SK-N-SH (cell line): ENCODE measurements at regions of chr2 and their contacts with region 1.

Region 1: DNA sequence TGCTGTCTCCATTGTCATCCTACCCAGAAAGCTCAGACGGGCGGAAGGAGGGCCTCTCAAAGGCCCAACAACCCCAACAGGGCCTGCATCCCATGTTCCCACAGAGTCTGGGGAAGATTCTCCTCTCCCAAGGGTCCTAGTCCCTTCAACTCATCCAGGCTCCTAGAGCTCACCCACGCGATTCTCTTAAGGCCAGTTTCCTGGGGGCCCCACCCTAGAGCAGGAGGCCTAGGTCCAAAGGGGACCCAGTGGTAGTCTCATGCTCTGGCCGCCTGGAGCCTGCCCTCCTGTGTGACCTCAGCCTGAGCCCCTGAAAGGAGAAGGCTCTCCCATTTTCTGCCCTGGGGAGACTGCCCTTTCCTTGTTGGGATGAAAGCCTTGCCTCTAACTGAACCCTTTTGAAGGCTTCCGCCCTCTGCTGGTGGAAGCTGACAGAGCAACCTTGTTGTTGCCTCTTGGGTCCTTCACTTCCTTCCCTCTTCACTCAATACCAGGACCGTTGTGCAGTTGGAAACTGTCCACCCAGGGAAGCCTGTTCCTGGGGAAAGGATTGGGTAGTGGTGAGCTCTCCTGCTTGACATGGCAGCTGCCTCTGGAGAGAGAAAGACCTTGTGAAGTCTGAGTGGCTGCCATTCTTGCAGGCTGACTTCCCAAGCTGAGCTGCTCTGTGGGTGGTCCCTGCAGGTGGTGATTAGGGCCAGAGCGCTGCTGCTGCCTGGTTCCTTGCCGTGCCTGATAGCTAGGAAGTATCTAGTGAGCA is 86.0 kb upstream of the ALPP start:
- DNase-seq: peak; percentile 25
- H3K4me3 ChIP-seq: peak overlapping the region in 1 of 2 experiments; percentile 16; a peak in 1 of 4 replicates
- H3K27ac ChIP-seq: no peak overlapping the region; a peak in 1 of 4 replicates
- H3K4me1 ChIP-seq: peaks cover 0 to 3% of the 10 kb centered on the region in 2 experiments; a peak in 1 of 4 replicates
- H3K27me3 ChIP-seq: no peaks in the 10 kb centered on the region
- CTCF ChIP-seq: peak; percentile 65
- EP300 ChIP-seq: no peak
- RAD21 ChIP-seq: peak; percentile 36

Region 2: DNA sequence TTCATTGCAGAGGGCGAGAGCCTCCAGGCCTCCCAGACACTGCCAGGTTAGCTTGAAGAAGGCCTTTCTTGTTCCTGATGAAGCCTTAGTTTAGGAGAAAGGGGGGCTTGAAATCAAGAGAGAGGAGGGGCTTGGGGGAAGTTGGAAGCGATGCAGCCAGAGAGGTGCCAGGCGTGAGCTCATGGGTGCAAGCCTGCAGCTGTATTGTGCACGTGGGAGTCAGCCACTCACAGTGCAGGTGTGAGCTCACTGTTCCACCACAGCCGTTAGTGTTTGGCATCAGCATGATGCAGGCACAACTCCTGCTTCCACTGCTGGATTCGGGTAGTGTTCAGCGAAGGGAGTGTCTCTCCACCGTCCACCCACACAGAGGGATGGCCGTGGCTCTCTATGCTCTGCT is 17.5 kb after region 1 on chr2:
- CTCF ChIA-PET with region 1: interaction called, 16 read pairs
- POLR2A ChIA-PET with region 1: interaction called, 3 read pairs
- DNase-seq: no peak
- H3K4me3 ChIP-seq: no peak overlapping the region
- H3K27ac ChIP-seq: no peak overlapping the region
- H3K4me1 ChIP-seq: no peaks in the 10 kb centered on the region; a peak in 1 of 4 replicates
- H3K27me3 ChIP-seq: no peaks in the 10 kb centered on the region
- CTCF ChIP-seq: no peak
- EP300 ChIP-seq: no peak
- RAD21 ChIP-seq: no peak

Region 3: DNA sequence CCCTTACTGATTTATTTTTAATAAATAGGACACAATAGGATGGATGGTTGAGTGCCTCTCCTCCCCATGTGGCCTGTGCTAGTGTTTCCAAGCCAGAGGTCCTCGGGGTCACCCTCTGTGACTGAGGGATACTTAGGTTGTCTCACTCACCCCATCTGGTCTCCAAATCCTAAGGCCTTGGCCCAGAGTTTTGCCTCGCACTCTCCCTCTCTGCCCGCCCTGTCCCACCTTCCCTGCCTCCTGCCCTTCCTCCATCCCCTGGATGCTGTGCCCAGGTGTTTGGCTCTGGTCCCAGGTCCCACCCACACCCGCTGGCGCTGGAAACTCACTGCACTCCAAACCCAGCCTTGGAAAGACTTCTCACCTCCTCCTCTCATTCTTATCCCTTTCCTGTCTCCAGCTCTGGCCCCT is 199.8 kb after region 1 on chr2:
- CTCF ChIA-PET with region 1: no interaction called
- POLR2A ChIA-PET with region 1: no interaction called
- DNase-seq: no peak
- H3K4me3 ChIP-seq: no peak overlapping the region
- H3K27ac ChIP-seq: no peak overlapping the region
- H3K4me1 ChIP-seq: peaks cover 0 to 15% of the 10 kb centered on the region in 2 experiments; a peak in 1 of 4 replicates
- H3K27me3 ChIP-seq: 0 out of 2 replicates have a peak, but pooled peaks cover 1% of the 10 kb centered on the region
- CTCF ChIP-seq: no peak
- EP300 ChIP-seq: no peak
- RAD21 ChIP-seq: no peak